Naive thymus-derived CD8-positive, alpha-beta T cell (primary cell): ENCODE measurements at regions of chr1 and their contacts with region 1.

Region 1: GRCh38 chr1:39788758-39789570 is at the start of gene BMP8B:
- DNase-seq: peak in 9 of 10 donors; percentile 11 to 65 (median 30)
- ATAC-seq: peak; percentile 77 to 82
- H3K4me3 Mint-ChIP-seq: peak within 1 kb of the TSS; percentile 71 to 81 (median 77)
- H3K27ac Mint-ChIP-seq: peak within 1 kb of the TSS in 3 of 10 donors; percentile 37 to 69 (median 53)
- H3K4me1 Mint-ChIP-seq: peaks cover 3 to 14% (median 8%) of the 10 kb centered on the region in 4 donors
- H3K27me3 Mint-ChIP-seq: peaks cover 11 to 49% (median 23%) of the 10 kb centered on the region in 5 donors
- polyA plus RNA-seq, gene BMP8B: 0.13 TPM in 1 of 3 donors, not detected in the others

Region 2: DNA sequence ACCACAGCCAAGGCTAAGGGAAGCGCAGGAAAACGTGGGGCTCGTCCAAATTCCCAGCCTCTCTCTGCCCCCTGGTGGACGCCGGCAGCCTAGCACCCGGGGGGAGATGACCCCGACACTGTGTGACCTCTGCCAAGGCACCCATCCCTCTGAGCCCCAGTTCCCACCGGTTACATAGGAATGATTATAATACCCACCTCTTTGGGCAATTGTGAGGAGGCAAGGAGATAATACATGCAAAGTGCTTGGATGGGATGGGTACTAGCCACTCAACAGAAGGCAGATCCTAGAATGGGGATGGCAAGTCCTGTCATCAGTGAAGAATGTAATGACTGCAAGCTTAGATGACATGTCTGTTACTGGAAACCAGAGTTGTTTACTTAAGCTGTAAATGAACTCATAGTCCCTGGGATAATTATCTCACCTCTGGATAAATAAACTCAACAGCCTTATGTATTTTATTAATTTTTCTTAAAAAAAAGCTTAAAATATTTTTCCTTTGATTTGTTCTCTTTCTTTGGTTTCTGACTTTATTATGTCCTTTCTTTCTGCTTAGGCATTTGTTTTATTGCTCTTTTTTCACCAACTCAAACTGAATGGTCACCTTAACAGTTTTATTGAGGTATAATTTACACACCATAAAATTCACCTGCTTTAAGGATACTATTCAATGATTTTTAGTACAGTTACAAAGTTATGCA is 11.0 kb after region 1 on chr1:
- POLR2A ChIA-PET with region 1: interaction called, 13 read pairs
- DNase-seq: peak in 9 of 10 donors; percentile 27 to 78 (median 55)
- ATAC-seq: peak; percentile 65 to 69
- H3K4me3 Mint-ChIP-seq: peak overlapping the region in 9 of 10 donors; percentile 57 to 85 (median 76)
- H3K27ac Mint-ChIP-seq: peak overlapping the region in 9 of 10 donors; percentile 51 to 94 (median 75)
- H3K4me1 Mint-ChIP-seq: peaks cover 0 to 13% (median 8%) of the 10 kb centered on the region in 4 donors
- H3K27me3 Mint-ChIP-seq: no peaks in the 10 kb centered on the region